Activated CD8-positive, alpha-beta T cell treated with anti-CD3 and anti-CD28 coated beads, Interleukin-2, amount 10 ng/mL, durations not matched to agents 7 days and 5 days (primary cell): ENCODE measurements at regions of chr12 and their contacts with region 1.

Region 1: GRCh38 chr12:31890295-31891285 is 68.6 kb upstream of the RESF1 start:
- DNase-seq: peak; percentile 40
- ATAC-seq: peak; percentile 71
- H3K4me3 Mint-ChIP-seq: peak overlapping the region; percentile 55
- H3K27ac Mint-ChIP-seq: peak overlapping the region; percentile 90
- H3K4me1 Mint-ChIP-seq: peaks cover 52% of the 10 kb centered on the region
- H3K27me3 Mint-ChIP-seq: no peaks in the 10 kb centered on the region

Region 2: DNA sequence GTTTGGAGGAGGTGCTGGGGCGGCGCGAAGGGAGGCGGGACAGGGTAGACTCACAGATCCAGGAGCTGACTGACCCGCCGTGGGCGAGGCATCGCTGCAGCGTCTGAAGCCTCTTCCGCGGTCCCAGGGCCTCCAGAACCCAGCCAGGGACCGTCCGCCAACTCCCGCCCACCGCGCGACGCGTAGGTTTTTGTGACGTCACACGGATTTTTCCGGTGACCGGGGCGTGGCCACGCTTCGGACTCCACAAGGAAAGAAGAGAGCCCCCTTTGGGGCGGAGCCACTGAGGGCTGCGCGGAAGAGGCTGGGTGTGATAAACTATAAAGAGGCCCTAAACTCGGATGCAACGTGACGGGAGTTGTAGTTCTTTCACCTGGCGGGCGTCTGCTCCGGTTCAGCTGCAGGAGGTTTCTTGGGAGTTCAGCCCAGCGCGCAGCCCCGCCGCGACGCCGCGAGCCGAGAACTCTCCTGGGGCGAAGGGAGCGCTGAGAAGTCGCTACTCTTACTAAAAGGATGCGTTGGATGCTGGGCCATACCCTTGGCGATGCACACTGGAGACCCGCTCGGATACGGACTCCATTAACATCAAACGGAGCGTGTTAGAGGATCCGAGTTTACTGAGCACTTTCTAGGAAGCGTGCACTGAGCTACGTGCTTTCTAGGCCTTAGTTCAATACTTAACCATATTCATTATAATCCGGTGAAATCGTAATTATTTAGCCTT is 161.5 kb before region 1 on chr12 and contains the start of gene AMN1:
- CTCF ChIA-PET with region 1: interaction called, 3 read pairs
- POLR2A ChIA-PET with region 1: interaction called, 11 read pairs
- DNase-seq: peak; percentile 99
- ATAC-seq: peak; percentile 97
- H3K4me3 Mint-ChIP-seq: peak within 1 kb of the TSS; percentile 96
- H3K27ac Mint-ChIP-seq: peak within 1 kb of the TSS; percentile 99
- H3K4me1 Mint-ChIP-seq: peaks cover 51% of the 10 kb centered on the region
- H3K27me3 Mint-ChIP-seq: no peaks in the 10 kb centered on the region
- total RNA-seq, gene AMN1: 3.4 to 3.5 TPM

Region 3: GRCh38 chr12:31849090-31849687 is 41.4 kb before region 1 on chr12:
- CTCF ChIA-PET with region 1: no interaction called
- POLR2A ChIA-PET with region 1: no interaction called
- DNase-seq: no peak
- ATAC-seq: no peak
- H3K4me3 Mint-ChIP-seq: no peak overlapping the region
- H3K27ac Mint-ChIP-seq: no peak overlapping the region
- H3K4me1 Mint-ChIP-seq: peaks cover 2% of the 10 kb centered on the region
- H3K27me3 Mint-ChIP-seq: no peaks in the 10 kb centered on the region